Activated CD8-positive, alpha-beta T cell treated with anti-CD3 and anti-CD28 coated beads for 36 hours (primary cell): ENCODE measurements at regions of chr5 and their contacts with region 1.

Region 1: GRCh38 chr5:40386289-40386688 is 293.4 kb upstream of the PTGER4 start:
- DNase-seq: peak; percentile 60
- ATAC-seq: peak; percentile 31
- H3K4me3 Mint-ChIP-seq: no peak overlapping the region
- H3K27ac Mint-ChIP-seq: no peak overlapping the region
- H3K4me1 Mint-ChIP-seq: peaks cover 81% of the 10 kb centered on the region
- H3K27me3 Mint-ChIP-seq: no peaks in the 10 kb centered on the region
- CTCF ChIP-seq: no peak

Region 2: DNA sequence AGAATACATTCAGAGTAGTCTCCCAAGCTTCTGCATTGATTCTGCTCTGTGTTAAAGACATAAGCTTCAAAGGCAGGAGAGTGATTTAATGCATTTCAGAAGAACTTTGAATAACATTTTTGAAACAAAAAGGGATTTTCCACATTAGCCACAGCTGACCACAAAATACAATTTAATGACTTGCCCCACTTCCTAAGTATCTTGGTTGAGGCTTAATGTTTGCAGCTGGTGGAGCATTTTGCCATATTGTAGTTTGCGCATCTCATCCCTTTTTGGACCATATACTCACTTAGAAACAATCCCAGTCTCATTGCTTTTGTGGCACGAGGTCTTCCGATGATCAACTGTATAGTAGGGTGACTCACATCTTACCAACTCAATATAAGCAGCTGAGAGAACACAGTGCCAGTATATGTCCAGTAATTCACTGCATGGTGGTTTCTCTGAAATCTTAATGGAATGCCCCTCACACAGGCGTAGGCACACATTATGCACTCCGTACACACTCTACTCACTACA is 162.3 kb before region 1 on chr5:
- CTCF ChIA-PET with region 1: no interaction called
- POLR2A ChIA-PET with region 1: no interaction called
- intact Hi-C with region 1: loop called (anchors 1 kb)
- DNase-seq: peak; percentile 65
- ATAC-seq: peak; percentile 90
- H3K4me3 Mint-ChIP-seq: peak overlapping the region; percentile 14
- H3K27ac Mint-ChIP-seq: peak overlapping the region; percentile 82
- H3K4me1 Mint-ChIP-seq: peaks cover 51% of the 10 kb centered on the region
- H3K27me3 Mint-ChIP-seq: peaks cover 1% of the 10 kb centered on the region
- CTCF ChIP-seq: no peak

Region 3: GRCh38 chr5:40321514-40321913 is 64.8 kb before region 1 on chr5:
- CTCF ChIA-PET with region 1: no interaction called
- POLR2A ChIA-PET with region 1: no interaction called
- intact Hi-C with region 1: no loop called
- DNase-seq: no peak
- ATAC-seq: no peak
- H3K4me3 Mint-ChIP-seq: no peak overlapping the region
- H3K27ac Mint-ChIP-seq: no peak overlapping the region
- H3K4me1 Mint-ChIP-seq: peaks cover 7% of the 10 kb centered on the region
- H3K27me3 Mint-ChIP-seq: no peaks in the 10 kb centered on the region
- CTCF ChIP-seq: no peak

Region 4: DNA sequence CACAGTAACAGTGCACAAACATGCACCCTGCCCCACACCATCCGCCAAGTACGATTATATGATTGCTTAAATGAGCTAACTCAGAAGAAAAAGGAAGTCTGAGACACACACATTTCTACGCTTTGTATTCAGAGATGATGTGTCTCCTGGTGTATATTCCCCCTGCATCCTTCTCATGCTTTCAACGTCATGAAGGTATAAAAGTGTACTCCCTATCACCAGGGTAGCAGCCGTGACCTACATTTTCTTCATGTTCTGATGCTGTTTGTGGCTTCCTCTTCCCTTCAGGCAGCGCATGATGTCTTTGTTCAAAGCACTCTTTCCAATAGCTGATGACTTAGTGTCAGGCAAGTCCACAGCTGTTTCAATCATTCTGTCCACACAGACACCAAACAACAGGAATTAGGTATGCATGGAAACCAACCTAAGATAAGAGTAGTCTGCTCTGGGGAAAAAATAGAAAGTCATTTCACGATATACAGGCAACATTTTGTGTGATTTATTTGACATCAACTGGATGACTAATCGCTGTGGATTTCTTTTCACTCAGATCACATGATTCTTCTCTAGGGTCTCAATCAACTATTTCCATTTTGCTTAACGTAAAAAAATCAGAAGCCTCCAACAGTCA is 24.1 kb after region 1 on chr5:
- CTCF ChIA-PET with region 1: interaction called, 7 read pairs
- POLR2A ChIA-PET with region 1: interaction called, 9 read pairs
- intact Hi-C with region 1: loop called (anchors 1 kb)
- DNase-seq: peak; percentile 80
- ATAC-seq: peak; percentile 83
- H3K4me3 Mint-ChIP-seq: peak overlapping the region; percentile 62
- H3K27ac Mint-ChIP-seq: peak overlapping the region; percentile 93
- H3K4me1 Mint-ChIP-seq: peaks cover 63% of the 10 kb centered on the region
- H3K27me3 Mint-ChIP-seq: no peaks in the 10 kb centered on the region
- CTCF ChIP-seq: no peak

Region 5: GRCh38 chr5:40437452-40437861 is 51.2 kb after region 1 on chr5:
- CTCF ChIA-PET with region 1: interaction called, 10 read pairs
- POLR2A ChIA-PET with region 1: interaction called, 3 read pairs
- intact Hi-C with region 1: loop called (anchors 10 kb)
- DNase-seq: peak; percentile 63
- ATAC-seq: peak; percentile 72
- H3K4me3 Mint-ChIP-seq: peak overlapping the region; percentile 19
- H3K27ac Mint-ChIP-seq: peak overlapping the region; percentile 86
- H3K4me1 Mint-ChIP-seq: peaks cover 81% of the 10 kb centered on the region
- H3K27me3 Mint-ChIP-seq: no peaks in the 10 kb centered on the region
- CTCF ChIP-seq: no peak

Region 6: GRCh38 chr5:40480392-40480791 is 94.1 kb after region 1 on chr5:
- CTCF ChIA-PET with region 1: no interaction called
- POLR2A ChIA-PET with region 1: no interaction called
- intact Hi-C with region 1: loop called (anchors 1 kb)
- DNase-seq: peak; percentile 81
- ATAC-seq: peak; percentile 78
- H3K4me3 Mint-ChIP-seq: peak overlapping the region; percentile 51
- H3K27ac Mint-ChIP-seq: peak overlapping the region; percentile 83
- H3K4me1 Mint-ChIP-seq: peaks cover 59% of the 10 kb centered on the region
- H3K27me3 Mint-ChIP-seq: no peaks in the 10 kb centered on the region
- CTCF ChIP-seq: no peak